ENCODE measurements at regions of chr6 and their contacts with region 1.

Region 1: GRCh38 chr6:131683479-131683878 is 17.7 kb downstream of the OR2A4 start:
- DNase-seq: peak; percentile 22
- H3K4me3 Mint-ChIP-seq: no peak overlapping the region
- H3K27ac Mint-ChIP-seq: peak overlapping the region; percentile 65
- H3K4me1 Mint-ChIP-seq: peaks cover 50% of the 10 kb centered on the region
- H3K27me3 Mint-ChIP-seq: no peaks in the 10 kb centered on the region

Region 2: DNA sequence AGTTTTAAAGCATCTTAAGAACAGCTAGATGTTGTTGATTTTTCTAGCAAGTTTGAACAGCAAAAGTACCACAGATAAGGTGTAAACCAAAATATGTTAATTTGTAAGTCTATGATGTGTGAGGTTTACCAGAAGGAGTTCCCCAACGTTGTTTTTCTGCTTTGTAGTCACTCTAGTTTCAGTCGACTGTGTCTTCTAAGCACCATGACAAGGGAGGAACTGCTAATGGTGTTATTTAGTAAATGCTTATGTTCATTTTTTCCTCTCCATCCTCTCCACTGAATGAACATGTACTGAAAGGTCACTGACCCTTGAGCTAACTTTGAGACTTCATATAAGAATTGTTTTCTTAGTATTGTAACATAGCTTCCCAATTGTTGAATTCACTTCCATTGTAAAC is 43.4 kb before region 1 on chr6:
- intact Hi-C with region 1: loop called (anchors 1 kb)
- DNase-seq: no peak
- H3K4me3 Mint-ChIP-seq: peak overlapping the region; percentile 53
- H3K27ac Mint-ChIP-seq: peak overlapping the region; percentile 86
- H3K4me1 Mint-ChIP-seq: peaks cover 26% of the 10 kb centered on the region
- H3K27me3 Mint-ChIP-seq: no peaks in the 10 kb centered on the region

Region 3: GRCh38 chr6:131756039-131756438 is 72.6 kb after region 1 on chr6:
- intact Hi-C with region 1: loop called (anchors 2 kb)
- DNase-seq: no peak
- H3K4me3 Mint-ChIP-seq: no peak overlapping the region
- H3K27ac Mint-ChIP-seq: no peak overlapping the region
- H3K4me1 Mint-ChIP-seq: peaks cover 12% of the 10 kb centered on the region
- H3K27me3 Mint-ChIP-seq: peaks cover 6% of the 10 kb centered on the region

Region 4: DNA sequence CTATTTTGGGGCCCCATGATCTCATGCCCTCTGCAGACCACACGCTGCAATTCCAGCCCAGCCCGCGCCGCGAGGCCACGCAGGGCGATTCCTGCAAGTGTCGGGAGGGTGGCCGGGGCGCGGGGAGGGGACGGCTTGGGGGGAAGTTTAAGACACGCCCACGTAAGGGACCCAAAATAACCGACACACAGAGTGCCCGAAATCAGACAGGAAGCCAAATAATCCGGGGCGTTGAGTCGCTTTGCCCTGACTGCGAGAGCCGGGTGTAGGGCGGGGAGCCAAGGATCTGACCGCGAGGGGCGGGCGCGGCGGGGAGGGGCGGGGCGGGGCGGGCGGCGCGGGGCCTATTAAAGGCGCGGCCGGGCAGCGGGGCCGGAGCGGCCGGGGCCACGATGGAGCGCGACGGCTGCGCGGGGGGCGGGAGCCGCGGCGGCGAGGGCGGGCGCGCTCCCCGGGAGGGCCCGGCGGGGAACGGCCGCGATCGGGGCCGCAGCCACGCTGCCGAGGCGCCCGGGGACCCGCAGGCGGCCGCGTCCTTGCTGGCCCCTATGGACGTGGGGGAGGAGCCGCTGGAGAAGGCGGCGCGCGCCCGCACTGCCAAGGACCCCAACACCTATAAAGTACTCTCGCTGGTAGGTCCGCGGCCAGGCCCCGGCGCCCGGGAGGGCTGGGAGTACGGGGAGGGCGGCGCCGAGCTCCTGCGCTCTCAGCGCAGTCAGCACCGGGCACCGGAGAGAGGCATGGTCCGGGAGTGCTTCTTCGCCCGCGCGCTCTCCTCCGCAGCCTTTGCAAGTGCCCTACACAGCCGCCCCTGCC is 124.4 kb after region 1 on chr6 and contains the start of gene ENPP1:
- intact Hi-C with region 1: loop called (anchors 5 kb)
- DNase-seq: peak; percentile 52
- H3K4me3 Mint-ChIP-seq: peak within 1 kb of the TSS; percentile 90
- H3K27ac Mint-ChIP-seq: peak within 1 kb of the TSS; percentile 85
- H3K4me1 Mint-ChIP-seq: peaks cover 37% of the 10 kb centered on the region
- H3K27me3 Mint-ChIP-seq: peaks cover 40% of the 10 kb centered on the region
- total RNA-seq, gene ENPP1: 34.8 TPM in 2 replicates

Region 5: DNA sequence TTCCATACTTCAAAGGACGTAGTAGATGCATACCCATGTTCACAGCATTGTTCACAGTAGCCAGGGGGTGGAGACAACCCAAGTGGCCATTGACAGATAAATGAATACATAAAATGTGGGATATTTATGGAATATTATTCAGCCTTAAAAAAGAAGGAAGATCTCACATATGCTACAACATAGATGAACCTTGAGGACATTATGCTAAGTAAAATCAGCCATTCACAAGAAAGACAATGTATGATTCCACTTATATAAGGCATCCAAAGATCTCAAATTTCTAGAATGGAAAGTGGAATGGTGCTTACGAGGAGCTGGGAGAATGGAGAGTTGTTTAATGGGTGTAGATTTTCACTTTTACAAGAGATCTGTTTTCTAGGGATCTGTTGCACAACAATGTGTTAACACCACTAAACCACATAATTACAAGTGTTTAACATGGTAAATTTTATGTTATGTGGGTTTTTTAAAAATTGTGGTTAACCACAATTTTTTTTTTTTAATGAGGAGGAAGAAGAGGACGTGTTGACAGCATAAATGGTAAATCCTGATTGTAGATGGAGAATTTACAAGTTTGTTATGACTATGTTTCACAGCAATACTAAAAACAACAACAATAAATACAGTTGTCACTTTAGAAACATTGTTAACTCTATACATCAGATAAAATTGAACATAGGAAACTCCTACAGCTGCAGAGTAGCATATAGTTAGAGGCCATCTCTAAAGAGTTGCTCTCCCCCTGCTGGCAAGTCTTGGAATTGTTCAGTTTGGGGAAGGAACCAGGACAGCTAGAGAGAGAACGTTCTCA is 226.1 kb after region 1 on chr6:
- intact Hi-C with region 1: loop called (anchors 2 kb)
- DNase-seq: peak; percentile 66
- H3K4me3 Mint-ChIP-seq: no peak overlapping the region
- H3K27ac Mint-ChIP-seq: peak overlapping the region; percentile 67
- H3K4me1 Mint-ChIP-seq: peaks cover 30% of the 10 kb centered on the region
- H3K27me3 Mint-ChIP-seq: peaks cover 29% of the 10 kb centered on the region

Region 6: DNA sequence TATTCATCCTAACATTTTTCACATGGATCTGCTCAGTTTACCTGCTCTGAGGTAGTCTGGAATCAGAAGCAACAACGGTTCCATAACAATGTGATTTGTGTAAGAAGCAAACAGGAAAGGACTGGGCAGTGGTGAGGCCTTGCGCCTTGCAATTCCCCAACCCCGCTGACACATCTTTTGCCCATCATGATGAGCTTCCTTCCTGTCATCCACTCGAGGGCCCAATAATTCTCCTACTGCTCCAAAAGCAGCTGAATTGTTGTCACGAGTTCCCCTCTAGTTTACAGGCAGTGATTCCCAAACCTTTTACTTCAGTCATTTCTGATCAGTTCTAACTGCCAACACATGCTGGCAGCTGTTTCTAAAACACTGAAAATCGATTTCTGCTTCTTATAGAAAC is 806.5 kb after region 1 on chr6:
- intact Hi-C with region 1: loop called (anchors 10 kb)
- DNase-seq: no peak
- H3K4me3 Mint-ChIP-seq: no peak overlapping the region
- H3K27ac Mint-ChIP-seq: no peak overlapping the region
- H3K4me1 Mint-ChIP-seq: peaks cover 20% of the 10 kb centered on the region
- H3K27me3 Mint-ChIP-seq: no peaks in the 10 kb centered on the region

Measured in activated T-helper 2 cell treated with anti-CD3 and anti-CD28 coated beads, Interferon-gamma antibody, Interleukin-2, Interleukin-4, amounts not matched to agents 10 μg/mL and 5 μg/mL and 100 μg/mL, durations not matched to agents 14 hours and 24 hours and 36 hours (primary cell).